ENCODE measurements at regions of chr5 and their contacts with region 1.

Region 1: GRCh38 chr5:77426670-77427069 is 65.4 kb downstream of the WDR41 start:
- DNase-seq: peak in 1 of 2 experiments; percentile 42
- H3K4me3 ChIP-seq: no peak overlapping the region
- H3K4me3 Mint-ChIP-seq: peak overlapping the region; percentile 33
- H3K27ac Mint-ChIP-seq: peak overlapping the region; percentile 85
- H3K4me1 ChIP-seq: peaks cover 50% of the 10 kb centered on the region
- H3K4me1 Mint-ChIP-seq: peaks cover 24% of the 10 kb centered on the region
- H3K27me3 ChIP-seq: no peaks in the 10 kb centered on the region
- H3K27me3 Mint-ChIP-seq: no peaks in the 10 kb centered on the region
- CTCF ChIP-seq: no peak

Region 2: DNA sequence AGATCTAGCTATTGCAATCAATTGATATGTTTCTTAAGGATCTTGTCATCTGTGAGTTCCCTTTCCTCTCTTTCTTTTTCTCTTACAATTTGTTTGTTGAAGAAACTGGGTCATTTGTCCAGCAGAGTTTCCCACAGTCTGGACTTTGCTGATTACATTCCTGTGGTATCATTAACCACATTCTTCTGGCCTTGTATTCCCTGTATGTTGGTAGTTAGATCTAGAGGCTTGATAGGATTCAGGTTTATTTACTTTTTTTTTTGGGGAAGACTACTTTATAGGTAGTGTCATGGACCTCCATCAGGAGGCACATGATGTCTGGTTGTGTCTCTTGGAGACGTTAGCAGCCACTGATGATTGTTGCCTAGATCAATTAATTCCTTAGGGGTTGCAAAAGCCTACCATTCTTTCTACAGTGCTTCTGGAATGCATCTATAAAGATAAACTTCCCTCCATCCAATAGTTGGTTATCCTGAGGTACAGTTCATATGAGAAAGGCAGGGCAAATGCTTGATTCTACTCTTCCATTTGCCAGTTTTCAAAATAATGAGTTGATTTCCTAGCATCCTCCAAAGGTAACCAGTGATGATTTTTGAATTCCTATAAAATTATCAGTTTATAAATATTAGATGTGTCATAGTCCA is 201.8 kb before region 1 on chr5:
- CTCF ChIA-PET with region 1: interaction called, 3 read pairs
- POLR2A ChIA-PET with region 1: no interaction called
- intact Hi-C with region 1: loop called (anchors 2 kb)
- DNase-seq: peak; percentile 52 to 68
- H3K4me3 ChIP-seq: no peak overlapping the region
- H3K4me3 Mint-ChIP-seq: peak overlapping the region; percentile 19
- H3K27ac Mint-ChIP-seq: no peak overlapping the region
- H3K4me1 ChIP-seq: peaks cover 21% of the 10 kb centered on the region
- H3K4me1 Mint-ChIP-seq: peaks cover 8% of the 10 kb centered on the region
- H3K27me3 ChIP-seq: no peaks in the 10 kb centered on the region
- H3K27me3 Mint-ChIP-seq: no peaks in the 10 kb centered on the region
- CTCF ChIP-seq: no peak

Region 3: GRCh38 chr5:77328930-77329647 is 97.6 kb before region 1 on chr5:
- CTCF ChIA-PET with region 1: no interaction called
- POLR2A ChIA-PET with region 1: no interaction called
- intact Hi-C with region 1: loop called (anchors 1 kb)
- DNase-seq: no peak
- H3K4me3 ChIP-seq: no peak overlapping the region
- H3K4me3 Mint-ChIP-seq: no peak overlapping the region
- H3K27ac Mint-ChIP-seq: no peak overlapping the region
- H3K4me1 ChIP-seq: peaks cover 6% of the 10 kb centered on the region; the same call in 1 of the 2 replicates
- H3K4me1 Mint-ChIP-seq: peaks cover 8% of the 10 kb centered on the region
- H3K27me3 ChIP-seq: no peaks in the 10 kb centered on the region
- H3K27me3 Mint-ChIP-seq: no peaks in the 10 kb centered on the region
- CTCF ChIP-seq: no peak

Region 4: GRCh38 chr5:77358255-77359205 is 68.1 kb before region 1 on chr5:
- CTCF ChIA-PET with region 1: no interaction called
- POLR2A ChIA-PET with region 1: no interaction called
- intact Hi-C with region 1: loop called (anchors 2 kb)
- DNase-seq: peak; percentile 47 to 53
- H3K4me3 ChIP-seq: no peak overlapping the region
- H3K4me3 Mint-ChIP-seq: no peak overlapping the region
- H3K27ac Mint-ChIP-seq: peak overlapping the region; percentile 51
- H3K4me1 ChIP-seq: peaks cover 22% of the 10 kb centered on the region
- H3K4me1 Mint-ChIP-seq: peaks cover 23% of the 10 kb centered on the region
- H3K27me3 ChIP-seq: no peaks in the 10 kb centered on the region
- H3K27me3 Mint-ChIP-seq: no peaks in the 10 kb centered on the region
- CTCF ChIP-seq: no peak

Region 5: DNA sequence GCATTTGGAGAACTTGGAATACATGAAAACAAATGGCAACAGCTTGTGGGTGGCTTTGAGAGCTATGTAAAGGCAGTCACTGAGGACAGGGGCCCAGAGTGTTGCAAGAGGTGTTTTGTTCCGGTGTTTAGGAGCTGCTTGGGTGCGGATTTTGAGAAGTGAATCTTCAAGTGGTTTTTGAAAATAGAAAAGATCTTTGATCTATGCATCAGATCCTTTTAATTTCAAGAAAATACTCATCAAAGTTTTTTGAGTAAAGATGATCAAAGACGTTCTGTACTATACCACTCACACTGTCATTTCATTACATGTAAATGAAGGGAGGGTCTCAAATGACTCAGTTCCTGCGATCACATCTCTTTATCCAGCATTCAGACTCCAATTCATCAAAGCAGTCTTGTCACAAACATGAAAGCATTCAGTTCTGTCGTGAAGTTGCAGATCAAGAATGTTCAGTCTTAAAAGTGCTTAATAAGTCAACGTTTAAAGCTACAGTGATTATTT is 47.1 kb before region 1 on chr5:
- CTCF ChIA-PET with region 1: no interaction called
- POLR2A ChIA-PET with region 1: no interaction called
- intact Hi-C with region 1: no loop called
- DNase-seq: no peak
- H3K4me3 ChIP-seq: no peak overlapping the region
- H3K4me3 Mint-ChIP-seq: no peak overlapping the region
- H3K27ac Mint-ChIP-seq: no peak overlapping the region
- H3K4me1 ChIP-seq: peaks cover 27% of the 10 kb centered on the region
- H3K4me1 Mint-ChIP-seq: peaks cover 30% of the 10 kb centered on the region
- H3K27me3 ChIP-seq: no peaks in the 10 kb centered on the region
- H3K27me3 Mint-ChIP-seq: no peaks in the 10 kb centered on the region
- CTCF ChIP-seq: no peak

Region 6: GRCh38 chr5:77394064-77394716 is 32.5 kb before region 1 on chr5:
- CTCF ChIA-PET with region 1: no interaction called
- POLR2A ChIA-PET with region 1: no interaction called
- intact Hi-C with region 1: loop called (anchors 1 kb)
- DNase-seq: peak in 1 of 2 experiments; percentile 38
- H3K4me3 ChIP-seq: no peak overlapping the region
- H3K4me3 Mint-ChIP-seq: no peak overlapping the region
- H3K27ac Mint-ChIP-seq: no peak overlapping the region
- H3K4me1 ChIP-seq: peaks cover 38% of the 10 kb centered on the region
- H3K4me1 Mint-ChIP-seq: peaks cover 35% of the 10 kb centered on the region
- H3K27me3 ChIP-seq: no peaks in the 10 kb centered on the region
- H3K27me3 Mint-ChIP-seq: no peaks in the 10 kb centered on the region
- CTCF ChIP-seq: peak in 1 of 2 experiments; percentile 25

Region 7: DNA sequence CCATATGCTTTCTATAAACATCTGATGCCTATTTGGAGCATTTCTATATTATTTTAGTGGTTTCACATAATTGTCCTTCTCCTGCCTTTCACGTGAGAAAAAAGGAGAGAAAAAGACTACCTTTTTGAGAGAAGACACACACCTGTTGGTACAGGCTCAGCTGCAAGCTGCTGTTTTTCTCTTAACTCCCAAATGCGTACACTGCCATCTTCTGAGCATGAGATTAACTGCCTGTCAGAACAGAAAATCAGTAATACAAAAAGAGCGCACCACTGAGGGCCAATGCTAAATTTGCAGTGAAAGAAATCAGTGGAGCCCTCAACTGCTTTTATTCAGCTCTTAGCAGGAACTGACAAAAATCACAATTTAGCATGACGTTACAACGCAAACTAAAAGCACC is 10.5 kb after region 1 on chr5:
- CTCF ChIA-PET with region 1: interaction called, 14 read pairs
- POLR2A ChIA-PET with region 1: no interaction called
- intact Hi-C with region 1: no loop called
- DNase-seq: peak in 1 of 2 experiments; percentile 59
- H3K4me3 ChIP-seq: no peak overlapping the region
- H3K4me3 Mint-ChIP-seq: no peak overlapping the region
- H3K27ac Mint-ChIP-seq: no peak overlapping the region
- H3K4me1 ChIP-seq: peaks cover 5% of the 10 kb centered on the region; the same call in 1 of the 2 replicates
- H3K4me1 Mint-ChIP-seq: peaks cover 7% of the 10 kb centered on the region
- H3K27me3 ChIP-seq: no peaks in the 10 kb centered on the region
- H3K27me3 Mint-ChIP-seq: no peaks in the 10 kb centered on the region
- CTCF ChIP-seq: peak; percentile 56 to 70

Region 8: DNA sequence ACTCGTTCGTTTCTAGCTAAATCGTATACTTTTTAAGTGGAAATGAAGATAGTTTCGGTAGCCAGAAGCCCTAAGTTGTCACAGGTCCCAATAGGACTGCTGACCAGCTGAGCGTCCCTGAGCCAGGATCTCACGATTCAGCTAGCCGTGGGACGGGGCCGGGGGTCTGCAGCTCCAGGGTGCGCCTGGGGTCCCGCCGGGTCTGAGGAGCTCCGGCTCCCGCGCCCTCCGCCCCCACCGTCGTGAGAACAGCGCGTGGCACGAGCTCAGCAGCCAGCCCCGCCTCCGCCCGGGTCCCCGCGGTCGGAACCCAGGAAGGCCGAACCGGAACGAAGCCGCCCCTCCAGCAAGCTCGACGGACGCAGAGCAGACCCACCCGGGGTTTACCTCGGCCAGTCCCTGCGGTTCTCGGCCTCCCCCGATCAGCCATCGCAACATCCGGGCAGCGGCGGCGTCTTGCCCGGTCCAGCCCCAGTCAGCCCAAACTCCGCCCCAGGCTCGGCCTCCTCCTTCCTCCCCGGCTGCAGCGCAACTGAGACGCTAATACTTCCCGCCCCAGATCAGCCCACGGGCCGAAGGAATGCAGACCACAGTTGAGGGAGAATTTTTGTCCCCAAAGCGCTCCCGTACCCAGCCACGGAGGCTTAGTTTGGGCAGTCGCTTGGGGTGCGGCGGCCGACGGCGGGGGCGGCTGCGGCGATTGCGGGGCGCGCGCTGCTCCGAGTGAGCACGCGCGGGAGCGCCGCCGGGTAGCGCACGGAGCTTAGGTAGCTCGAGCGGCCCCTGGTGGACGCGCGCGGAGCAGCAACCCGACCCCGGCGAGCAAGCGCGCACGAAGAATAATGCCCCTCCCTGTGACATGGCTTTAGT is 65.3 kb after region 1 on chr5 and contains the start of gene WDR41:
- CTCF ChIA-PET with region 1: interaction called, 12 read pairs
- POLR2A ChIA-PET with region 1: interaction called, 3 read pairs
- intact Hi-C with region 1: loop called (anchors 5 kb)
- DNase-seq: peak; percentile 89 to 91
- H3K4me3 ChIP-seq: peak within 1 kb of the TSS; percentile 81
- H3K4me3 Mint-ChIP-seq: peak within 1 kb of the TSS; percentile 97
- H3K27ac Mint-ChIP-seq: peak within 1 kb of the TSS; percentile 99
- H3K4me1 ChIP-seq: no peaks in the 10 kb centered on the region
- H3K4me1 Mint-ChIP-seq: no peaks in the 10 kb centered on the region
- H3K27me3 ChIP-seq: no peaks in the 10 kb centered on the region
- H3K27me3 Mint-ChIP-seq: peaks cover 13% of the 10 kb centered on the region
- CTCF ChIP-seq: peak; percentile 90 to 91
- total RNA-seq, gene WDR41: 64.1 and 66.2 TPM in 2 replicates